Activated CD4-positive, alpha-beta T cell treated with anti-CD3 and anti-CD28 coated beads, Interleukin-2, amount 10 ng/mL, durations not matched to agents 7 days and 5 days (primary cell): ENCODE measurements at regions of chr10 and their contacts with region 1.

Region 1: GRCh38 chr10:94320285-94320914 is 42.3 kb downstream of the NOC3L start:
- DNase-seq: peak; percentile 75
- H3K4me3 Mint-ChIP-seq: no peak overlapping the region
- H3K27ac Mint-ChIP-seq: no peak overlapping the region
- H3K4me1 Mint-ChIP-seq: peaks cover 2% of the 10 kb centered on the region
- H3K27me3 Mint-ChIP-seq: no peaks in the 10 kb centered on the region

Region 2: GRCh38 chr10:94225589-94225988 is 94.8 kb before region 1 on chr10:
- CTCF ChIA-PET with region 1: no interaction called
- POLR2A ChIA-PET with region 1: no interaction called
- DNase-seq: no peak
- H3K4me3 Mint-ChIP-seq: no peak overlapping the region
- H3K27ac Mint-ChIP-seq: no peak overlapping the region
- H3K4me1 Mint-ChIP-seq: no peaks in the 10 kb centered on the region
- H3K27me3 Mint-ChIP-seq: no peaks in the 10 kb centered on the region

Region 3: DNA sequence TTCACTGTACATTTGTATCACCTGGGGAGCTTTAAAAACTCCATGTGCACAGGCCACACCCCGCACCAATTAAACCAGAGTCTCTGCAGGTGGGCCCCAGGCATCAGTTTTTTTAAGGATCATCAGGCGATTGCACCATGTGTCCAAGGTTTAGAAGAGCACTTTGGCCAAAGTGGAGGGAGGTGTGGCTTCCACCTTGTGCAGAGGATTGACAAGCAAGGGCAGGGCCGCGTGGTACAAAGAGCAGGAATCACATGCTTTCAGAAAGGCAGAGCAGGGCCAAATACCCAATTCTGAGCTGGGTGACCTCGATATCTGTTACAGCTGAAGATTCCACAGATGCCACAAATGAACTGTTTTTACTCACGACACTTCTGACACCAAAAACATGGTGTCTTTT is 10.0 kb before region 1 on chr10:
- CTCF ChIA-PET with region 1: interaction called, 12 read pairs
- POLR2A ChIA-PET with region 1: no interaction called
- DNase-seq: no peak
- H3K4me3 Mint-ChIP-seq: no peak overlapping the region
- H3K27ac Mint-ChIP-seq: no peak overlapping the region
- H3K4me1 Mint-ChIP-seq: no peaks in the 10 kb centered on the region
- H3K27me3 Mint-ChIP-seq: peaks cover 38% of the 10 kb centered on the region